Caco-2 (cell line): ENCODE measurements at regions of chr4 and their contacts with region 1.

Region 1: DNA sequence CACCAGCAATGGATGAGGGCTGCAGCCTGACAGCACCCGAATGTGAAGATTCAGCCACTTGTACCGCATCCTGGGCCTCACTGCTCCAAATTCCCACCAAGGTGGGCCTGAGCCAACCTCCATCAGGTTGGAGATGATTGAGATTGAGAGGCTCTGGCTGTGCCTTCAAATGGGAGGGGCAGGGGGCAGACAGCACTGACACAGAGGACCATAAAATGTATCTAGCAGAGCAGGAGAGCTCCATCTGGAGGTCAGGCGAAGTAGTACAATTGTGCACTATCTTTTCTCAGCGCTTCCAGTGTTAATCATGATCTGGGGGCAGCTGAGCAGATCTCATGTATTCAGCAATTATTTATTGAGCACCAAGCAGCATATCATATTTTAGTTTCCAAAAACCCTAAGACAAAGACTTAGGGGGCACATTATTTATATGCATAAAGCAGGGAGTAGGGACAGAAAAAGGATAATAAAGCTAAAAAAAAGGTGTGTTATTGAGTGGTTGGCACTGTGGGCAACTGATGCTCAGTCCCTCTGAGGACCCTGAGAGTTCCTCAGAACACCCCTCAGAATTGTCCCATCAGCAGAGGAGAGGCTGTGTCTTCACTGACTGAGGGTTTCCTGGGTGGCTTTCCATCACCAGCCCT is 31.6 kb upstream of the C1QTNF7 start:
- DNase-seq: peak; percentile 54 to 62
- H3K4me3 ChIP-seq: no peak overlapping the region
- H3K4me3 Mint-ChIP-seq: no peak overlapping the region
- H3K27ac Mint-ChIP-seq: no peak overlapping the region
- H3K4me1 ChIP-seq: no peaks in the 10 kb centered on the region
- H3K4me1 Mint-ChIP-seq: peaks cover 6% of the 10 kb centered on the region
- H3K27me3 ChIP-seq: no peaks in the 10 kb centered on the region
- H3K27me3 Mint-ChIP-seq: peaks cover 4% of the 10 kb centered on the region
- CTCF ChIP-seq: peak; percentile 68 to 69

Region 2: GRCh38 chr4:15231265-15232091 is 164.8 kb before region 1 on chr4:
- CTCF ChIA-PET with region 1: interaction called, 3 read pairs
- POLR2A ChIA-PET with region 1: no interaction called
- intact Hi-C with region 1: loop called (anchors 1 kb)
- DNase-seq: peak; percentile 67 to 74
- H3K4me3 ChIP-seq: no peak overlapping the region
- H3K4me3 Mint-ChIP-seq: no peak overlapping the region
- H3K27ac Mint-ChIP-seq: no peak overlapping the region
- H3K4me1 ChIP-seq: no peaks in the 10 kb centered on the region
- H3K4me1 Mint-ChIP-seq: no peaks in the 10 kb centered on the region
- H3K27me3 ChIP-seq: no peaks in the 10 kb centered on the region
- H3K27me3 Mint-ChIP-seq: peaks cover 5% of the 10 kb centered on the region
- CTCF ChIP-seq: peak; percentile 46 to 52

Region 3: DNA sequence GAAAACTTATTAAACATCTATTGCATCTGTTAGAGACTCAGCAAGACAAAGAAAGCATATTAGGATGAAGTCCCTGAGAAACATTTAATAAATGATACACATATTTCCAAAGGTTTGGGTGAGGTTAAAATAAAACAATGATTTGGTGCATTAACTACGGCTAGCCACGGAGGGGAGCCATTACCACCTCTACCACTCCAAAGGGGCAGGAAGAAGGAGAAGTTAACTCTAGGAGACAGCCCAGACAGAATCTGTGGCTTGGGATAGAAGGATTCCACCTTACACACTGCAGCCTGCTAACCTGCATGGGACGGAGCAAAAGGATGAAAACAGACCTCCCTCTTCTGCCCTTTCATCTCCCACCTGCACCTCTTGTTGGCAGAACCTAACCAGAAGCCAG is 157.6 kb before region 1 on chr4:
- CTCF ChIA-PET with region 1: interaction called, 3 read pairs
- POLR2A ChIA-PET with region 1: no interaction called
- intact Hi-C with region 1: loop called (anchors 1 kb)
- DNase-seq: peak in 1 of 2 experiments; percentile 34
- H3K4me3 ChIP-seq: no peak overlapping the region
- H3K4me3 Mint-ChIP-seq: no peak overlapping the region
- H3K27ac Mint-ChIP-seq: no peak overlapping the region
- H3K4me1 ChIP-seq: no peaks in the 10 kb centered on the region
- H3K4me1 Mint-ChIP-seq: peaks cover 6% of the 10 kb centered on the region
- H3K27me3 ChIP-seq: no peaks in the 10 kb centered on the region
- H3K27me3 Mint-ChIP-seq: peaks cover 9% of the 10 kb centered on the region
- CTCF ChIP-seq: peak; percentile 32 to 34

Region 4: GRCh38 chr4:15336410-15337172 is 59.7 kb before region 1 on chr4:
- CTCF ChIA-PET with region 1: no interaction called
- POLR2A ChIA-PET with region 1: no interaction called
- intact Hi-C with region 1: no loop called
- DNase-seq: no peak
- H3K4me3 ChIP-seq: no peak overlapping the region
- H3K4me3 Mint-ChIP-seq: no peak overlapping the region
- H3K27ac Mint-ChIP-seq: no peak overlapping the region
- H3K4me1 ChIP-seq: no peaks in the 10 kb centered on the region
- H3K4me1 Mint-ChIP-seq: no peaks in the 10 kb centered on the region
- H3K27me3 ChIP-seq: no peaks in the 10 kb centered on the region
- H3K27me3 Mint-ChIP-seq: peaks cover 4% of the 10 kb centered on the region
- CTCF ChIP-seq: no peak

Region 5: GRCh38 chr4:15349531-15349935 is 46.7 kb before region 1 on chr4:
- CTCF ChIA-PET with region 1: no interaction called
- POLR2A ChIA-PET with region 1: no interaction called
- intact Hi-C with region 1: loop called (anchors 5 kb)
- DNase-seq: no peak
- H3K4me3 ChIP-seq: no peak overlapping the region
- H3K4me3 Mint-ChIP-seq: no peak overlapping the region
- H3K27ac Mint-ChIP-seq: no peak overlapping the region
- H3K4me1 ChIP-seq: peaks cover 21% of the 10 kb centered on the region
- H3K4me1 Mint-ChIP-seq: peaks cover 14% of the 10 kb centered on the region
- H3K27me3 ChIP-seq: no peaks in the 10 kb centered on the region
- H3K27me3 Mint-ChIP-seq: peaks cover 3% of the 10 kb centered on the region
- CTCF ChIP-seq: no peak